Activated CD4-positive, alpha-beta T cell treated with anti-CD3 and anti-CD28 coated beads, Interleukin-2, amount 10 ng/mL, durations not matched to agents 7 days and 5 days (primary cell): ENCODE measurements at regions of chr9 and their contacts with region 1.

Region 1: DNA sequence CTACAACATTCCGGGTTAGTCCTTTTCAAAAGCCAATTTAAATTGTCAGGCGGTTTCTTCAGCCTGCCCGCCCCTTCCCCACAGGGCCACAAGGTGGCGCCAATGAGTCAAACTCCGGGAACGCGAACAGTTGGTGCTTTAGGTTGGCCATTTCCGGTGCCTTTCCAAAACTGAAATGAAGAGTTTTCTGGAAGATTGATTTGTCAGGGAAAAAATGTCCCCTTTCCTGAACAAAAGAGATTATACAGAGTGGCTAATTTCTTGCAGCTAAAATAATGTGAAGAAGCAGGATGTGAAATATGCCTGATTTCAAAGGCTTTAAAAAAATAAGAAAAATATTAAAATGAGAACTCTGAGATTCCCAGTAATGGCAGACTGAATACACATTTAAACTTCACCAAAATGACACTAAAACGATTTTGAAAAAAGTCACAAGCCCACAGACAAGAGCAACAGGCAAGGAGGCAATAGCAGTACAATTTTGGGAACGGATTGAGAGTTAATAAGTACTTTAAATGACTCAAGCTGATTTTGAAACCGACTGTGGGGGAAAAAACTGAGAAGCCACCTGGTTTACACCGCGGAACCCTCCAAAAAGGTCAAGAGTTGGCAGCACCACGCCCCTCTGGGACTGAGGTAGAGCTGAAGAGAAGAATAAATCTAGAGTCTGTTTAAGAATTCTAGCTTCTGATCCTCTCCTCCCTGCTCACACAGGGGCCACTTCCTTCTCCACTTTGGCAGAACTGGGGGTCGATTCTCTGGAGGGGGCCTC is 45.7 kb downstream of the SLC46A2 start:
- DNase-seq: peak; percentile 72
- H3K4me3 Mint-ChIP-seq: no peak overlapping the region
- H3K27ac Mint-ChIP-seq: no peak overlapping the region
- H3K4me1 Mint-ChIP-seq: peaks cover 12% of the 10 kb centered on the region
- H3K27me3 Mint-ChIP-seq: no peaks in the 10 kb centered on the region

Region 2: GRCh38 chr9:112680731-112681402 is 164.1 kb before region 1 on chr9:
- CTCF ChIA-PET with region 1: no interaction called
- POLR2A ChIA-PET with region 1: no interaction called
- DNase-seq: no peak
- H3K4me3 Mint-ChIP-seq: no peak overlapping the region
- H3K27ac Mint-ChIP-seq: no peak overlapping the region
- H3K4me1 Mint-ChIP-seq: peaks cover 11% of the 10 kb centered on the region
- H3K27me3 Mint-ChIP-seq: no peaks in the 10 kb centered on the region

Region 3: DNA sequence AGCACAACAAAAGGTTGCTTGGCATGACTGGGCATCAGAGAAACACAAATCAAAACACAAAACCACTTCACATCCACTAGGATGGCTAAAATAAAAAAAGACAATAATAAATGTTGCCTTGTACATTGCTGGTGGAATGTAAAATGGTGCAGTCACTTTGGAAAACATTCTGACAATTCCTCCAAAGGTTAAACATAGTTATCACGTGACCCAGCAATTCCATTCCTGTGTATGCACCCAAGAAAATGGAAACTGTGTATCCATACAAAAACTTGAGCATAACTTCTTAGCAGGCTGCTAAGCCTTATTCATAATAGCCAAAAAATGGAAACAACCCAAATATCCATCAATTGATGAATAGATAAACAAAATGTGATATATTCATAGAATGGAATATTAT is 55.9 kb after region 1 on chr9:
- CTCF ChIA-PET with region 1: interaction called, 16 read pairs
- POLR2A ChIA-PET with region 1: no interaction called
- DNase-seq: no peak
- H3K4me3 Mint-ChIP-seq: no peak overlapping the region
- H3K27ac Mint-ChIP-seq: no peak overlapping the region
- H3K4me1 Mint-ChIP-seq: peaks cover 21% of the 10 kb centered on the region
- H3K27me3 Mint-ChIP-seq: peaks cover 30% of the 10 kb centered on the region